H1 (cell line): ENCODE measurements at regions of chr19 and their contacts with region 1.

Region 1: GRCh38 chr19:35509861-35510625 is 3.4 kb downstream of the DMKN start:
- DNase-seq: peak; percentile 78 to 98
- H3K4me3 ChIP-seq: peak overlapping the region; percentile 77 to 99 (median 93)
- H3K27ac ChIP-seq: peak overlapping the region; percentile 92
- H3K4me1 ChIP-seq: peaks cover 0 to 25% (median 21%) of the 10 kb centered on the region in 4 experiments; a peak in 6 of 7 replicates
- H3K27me3 ChIP-seq: peaks cover 0 to 11% (median 6%) of the 10 kb centered on the region in 4 experiments; a peak in 3 of 7 replicates
- CTCF ChIP-seq: peak; percentile 94 to 97 (median 96)
- EP300 ChIP-seq: peak in 1 of 2 experiments; percentile 56; a peak in 1 of 3 replicates
- POLR2A ChIP-seq: peak; percentile 94
- RAD21 ChIP-seq: peak; percentile 71 to 80

Region 2: GRCh38 chr19:35484252-35485036 is 25.6 kb before region 1 on chr19:
- CTCF ChIA-PET with region 1: interaction called, 7 read pairs
- POLR2A ChIA-PET with region 1: interaction called, 27 read pairs
- DNase-seq: no peak
- H3K4me3 ChIP-seq: no peak overlapping the region
- H3K27ac ChIP-seq: no peak overlapping the region
- H3K4me1 ChIP-seq: no peaks in the 10 kb centered on the region
- H3K27me3 ChIP-seq: no peaks in the 10 kb centered on the region; a peak in 1 of 7 replicates
- CTCF ChIP-seq: no peak
- EP300 ChIP-seq: no peak
- POLR2A ChIP-seq: no peak
- RAD21 ChIP-seq: no peak

Region 3: DNA sequence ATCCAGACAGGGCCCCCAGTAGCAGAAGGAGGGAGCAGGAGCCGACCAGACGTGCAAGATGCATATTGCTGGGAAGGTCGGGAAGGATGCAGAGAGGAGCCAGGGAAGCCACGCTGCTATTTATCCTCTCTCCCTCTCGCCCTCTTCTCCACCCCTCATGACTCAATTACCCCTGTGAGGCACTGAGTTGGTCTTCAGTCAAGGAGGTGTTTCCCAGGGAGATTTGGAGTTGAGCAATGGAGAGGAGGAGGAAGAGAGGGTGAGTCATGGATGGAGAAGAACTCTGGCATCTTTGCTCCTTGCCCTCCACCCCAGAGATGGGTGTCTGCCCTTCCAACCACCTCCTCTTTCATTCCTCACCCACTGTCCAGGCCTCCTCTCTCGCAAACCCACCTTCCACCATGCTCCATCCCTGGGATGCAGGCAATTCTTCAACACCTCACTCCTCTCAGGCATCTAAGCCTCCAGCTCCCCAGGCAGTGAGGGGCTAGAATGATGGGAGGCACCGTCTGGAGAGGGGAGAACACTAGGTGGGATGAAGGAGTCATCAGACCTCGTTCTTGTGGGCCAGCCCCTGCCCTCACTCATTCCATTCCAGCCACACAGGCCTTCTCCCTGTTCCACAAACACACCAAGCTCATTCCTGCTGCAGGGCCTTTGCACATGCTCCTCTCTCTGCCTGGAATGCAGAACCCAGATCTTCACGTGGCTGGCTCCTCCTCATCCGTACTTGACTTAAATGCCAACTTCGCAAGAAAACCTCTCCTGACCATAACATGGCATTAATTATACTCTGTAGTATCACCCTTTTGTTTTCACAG is 18.4 kb after region 1 on chr19 and contains the start of gene SBSN:
- CTCF ChIA-PET with region 1: interaction called, 14 read pairs
- POLR2A ChIA-PET with region 1: interaction called, 34 read pairs
- DNase-seq: no peak
- H3K4me3 ChIP-seq: no peak within 1 kb of the TSS
- H3K27ac ChIP-seq: no peak within 1 kb of the TSS
- H3K4me1 ChIP-seq: peaks cover 7 to 18% (median 11%) of the 10 kb centered on the region in 4 experiments
- H3K27me3 ChIP-seq: peaks cover 0 to 17% (median 11%) of the 10 kb centered on the region in 4 experiments; a peak in 6 of 7 replicates
- CTCF ChIP-seq: no peak
- EP300 ChIP-seq: no peak
- POLR2A ChIP-seq: no peak
- RAD21 ChIP-seq: no peak
- total RNA-seq, gene SBSN: not detected in 2 replicates

Region 4: GRCh38 chr19:35533822-35534521 is 23.9 kb after region 1 on chr19:
- CTCF ChIA-PET with region 1: interaction called, 14 read pairs
- POLR2A ChIA-PET with region 1: interaction called, 19 read pairs
- DNase-seq: peak in 1 of 2 experiments; percentile 82
- H3K4me3 ChIP-seq: peak overlapping the region in 3 of 4 experiments; percentile 45 to 55 (median 52); a peak in 7 of 8 replicates
- H3K27ac ChIP-seq: no peak overlapping the region
- H3K4me1 ChIP-seq: peaks cover 0 to 18% (median 9%) of the 10 kb centered on the region in 4 experiments; a peak in 5 of 7 replicates
- H3K27me3 ChIP-seq: peaks cover 0 to 17% (median 14%) of the 10 kb centered on the region in 4 experiments; a peak in 6 of 7 replicates
- CTCF ChIP-seq: no peak
- EP300 ChIP-seq: no peak
- POLR2A ChIP-seq: peak in 1 of 2 experiments; percentile 47; a peak in 2 of 3 replicates
- RAD21 ChIP-seq: no peak